HCT116 (cell line): ENCODE measurements at regions of chr1 and their contacts with region 1.

Region 1: DNA sequence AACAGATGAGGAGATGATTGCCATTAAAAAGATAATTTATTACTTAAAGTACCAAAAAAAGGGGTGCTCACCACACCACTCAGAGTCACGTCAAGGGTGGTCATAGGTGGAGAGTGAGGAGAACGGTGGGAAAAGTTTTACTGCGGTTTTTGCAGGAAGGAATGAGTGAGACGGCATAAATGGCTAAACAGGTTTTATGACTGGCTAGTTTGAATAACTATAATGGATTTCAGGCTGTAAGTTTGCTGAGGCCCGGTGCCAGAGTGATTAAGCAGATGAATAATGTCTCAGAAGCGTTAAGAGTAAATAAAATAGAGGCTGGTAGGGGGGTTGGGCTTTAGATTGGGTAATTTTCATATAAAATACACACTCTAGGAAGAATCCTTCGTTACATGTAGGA is 1337.8 kb downstream of the AMY1C start:
- DNase-seq: no peak
- ATAC-seq: no peak
- H3K4me3 ChIP-seq: no peak overlapping the region
- H3K27ac ChIP-seq: no peak overlapping the region
- H3K4me1 ChIP-seq: no peaks in the 10 kb centered on the region
- H3K27me3 ChIP-seq: no peaks in the 10 kb centered on the region
- CTCF ChIP-seq: no peak
- POLR2A ChIP-seq: no peak
- RAD21 ChIP-seq: no peak

Region 2: DNA sequence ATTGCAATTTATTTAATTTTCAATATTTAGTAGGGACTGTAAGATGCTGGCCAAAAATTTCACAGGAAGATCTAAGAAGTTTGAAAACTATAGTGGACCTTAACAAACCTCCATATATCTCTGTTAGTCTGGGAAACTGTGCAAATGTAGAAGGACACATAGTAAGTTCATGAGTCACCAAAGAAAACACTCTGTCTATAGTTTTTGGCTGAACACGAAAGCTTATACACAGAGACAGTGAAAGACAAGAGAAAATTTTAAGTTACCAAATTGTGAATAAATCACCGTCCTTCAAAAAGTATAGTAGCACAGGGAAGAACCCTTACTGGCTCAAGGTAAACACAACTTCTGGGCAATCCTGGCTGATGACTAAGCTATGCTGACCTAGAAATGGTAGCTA is 280.0 kb before region 1 on chr1:
- CTCF ChIA-PET with region 1: no interaction called
- POLR2A ChIA-PET with region 1: no interaction called
- RAD21 ChIA-PET with region 1: no interaction called
- intact Hi-C with region 1: no loop called
- DNase-seq: no peak
- ATAC-seq: no peak
- H3K4me3 ChIP-seq: no peak overlapping the region
- H3K27ac ChIP-seq: no peak overlapping the region
- H3K4me1 ChIP-seq: no peaks in the 10 kb centered on the region
- H3K27me3 ChIP-seq: no peaks in the 10 kb centered on the region
- CTCF ChIP-seq: no peak
- POLR2A ChIP-seq: no peak
- RAD21 ChIP-seq: no peak

Region 3: DNA sequence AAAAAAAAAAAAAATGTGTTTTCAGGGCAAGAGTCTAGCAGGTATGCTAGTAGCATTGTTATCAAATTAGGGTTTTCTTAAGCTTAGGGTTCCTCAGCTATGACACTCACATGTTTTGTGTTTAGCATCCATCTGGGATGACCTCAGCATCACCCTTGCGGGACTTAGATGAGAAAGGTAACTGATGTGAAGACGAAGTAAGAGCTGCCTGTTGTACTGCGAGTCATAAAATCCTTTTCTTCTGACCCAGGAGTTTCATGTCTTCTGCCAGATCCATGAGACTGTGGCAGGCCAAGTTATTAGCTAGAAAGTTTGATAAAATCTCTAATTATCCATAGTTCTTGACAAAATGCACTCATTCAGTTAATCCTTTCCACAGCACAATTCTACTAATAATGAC is 86.7 kb before region 1 on chr1:
- CTCF ChIA-PET with region 1: no interaction called
- POLR2A ChIA-PET with region 1: no interaction called
- RAD21 ChIA-PET with region 1: no interaction called
- intact Hi-C with region 1: no loop called
- DNase-seq: no peak
- ATAC-seq: no peak
- H3K4me3 ChIP-seq: no peak overlapping the region
- H3K27ac ChIP-seq: no peak overlapping the region
- H3K4me1 ChIP-seq: no peaks in the 10 kb centered on the region
- H3K27me3 ChIP-seq: no peaks in the 10 kb centered on the region
- CTCF ChIP-seq: no peak
- POLR2A ChIP-seq: no peak
- RAD21 ChIP-seq: no peak

Region 4: GRCh38 chr1:105027838-105028471 is 59.5 kb before region 1 on chr1:
- CTCF ChIA-PET with region 1: no interaction called
- POLR2A ChIA-PET with region 1: no interaction called
- RAD21 ChIA-PET with region 1: no interaction called
- intact Hi-C with region 1: loop called (anchors 10 kb)
- DNase-seq: no peak
- ATAC-seq: no peak
- H3K4me3 ChIP-seq: no peak overlapping the region
- H3K27ac ChIP-seq: no peak overlapping the region
- H3K4me1 ChIP-seq: no peaks in the 10 kb centered on the region
- H3K27me3 ChIP-seq: no peaks in the 10 kb centered on the region
- CTCF ChIP-seq: no peak
- POLR2A ChIP-seq: no peak
- RAD21 ChIP-seq: no peak